CD4-positive, alpha-beta T cell (primary cell): ENCODE measurements at regions of chr18 and their contacts with region 1.

Region 1: DNA sequence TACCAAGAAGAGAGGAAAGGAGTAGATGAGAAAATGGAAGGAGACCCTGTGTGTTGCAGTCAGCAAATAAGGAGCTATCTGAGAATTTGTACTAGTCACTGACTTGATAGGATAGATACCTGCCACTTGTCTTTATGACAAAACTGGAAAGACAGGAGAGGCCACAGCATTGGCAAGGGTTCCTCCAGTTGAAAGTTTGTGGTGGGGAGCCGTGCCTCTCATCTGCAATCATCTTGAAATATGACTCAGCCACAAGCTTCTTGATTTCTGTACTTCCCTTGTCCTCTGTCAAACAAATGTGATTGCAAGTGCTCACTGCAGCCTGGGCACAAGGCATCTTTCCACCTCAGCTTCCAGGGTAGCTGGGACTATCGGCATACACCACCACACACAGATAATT is 99.1 kb downstream of the GREB1L start:
- DNase-seq: no peak
- ATAC-seq: no peak
- H3K4me3 ChIP-seq: no peak overlapping the region
- H3K4me3 Mint-ChIP-seq: no peak overlapping the region
- H3K27ac ChIP-seq: no peak overlapping the region
- H3K27ac Mint-ChIP-seq: no peak overlapping the region
- H3K4me1 ChIP-seq: no peaks in the 10 kb centered on the region
- H3K4me1 Mint-ChIP-seq: no peaks in the 10 kb centered on the region
- H3K27me3 ChIP-seq: no peaks in the 10 kb centered on the region
- H3K27me3 Mint-ChIP-seq: peaks cover 12% of the 10 kb centered on the region
- CTCF ChIP-seq: no peak

Region 2: DNA sequence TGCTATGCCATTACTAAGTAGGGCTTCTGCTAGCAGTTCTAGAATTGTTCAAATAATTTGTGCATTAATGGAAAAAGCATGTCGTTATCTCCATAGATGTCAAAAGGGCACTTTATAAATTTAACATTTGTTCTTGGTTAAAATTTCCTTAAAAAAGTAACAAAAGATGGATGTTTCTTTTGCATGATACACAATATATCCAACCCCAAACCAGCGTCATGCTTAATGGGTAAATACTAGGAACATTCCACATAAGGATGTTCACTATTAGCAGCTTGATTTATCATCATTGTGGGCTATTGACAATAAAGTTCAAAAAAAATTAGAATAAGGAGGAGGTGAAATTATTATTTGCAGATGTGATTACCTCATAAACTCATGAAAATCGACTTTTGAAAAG is 19.4 kb before region 1 on chr18:
- CTCF ChIA-PET with region 1: no interaction called
- POLR2A ChIA-PET with region 1: no interaction called
- intact Hi-C with region 1: loop called in 1 of 2 experiments (anchors 2 kb)
- DNase-seq: no peak
- ATAC-seq: no peak
- H3K4me3 ChIP-seq: no peak overlapping the region
- H3K4me3 Mint-ChIP-seq: no peak overlapping the region
- H3K27ac ChIP-seq: no peak overlapping the region
- H3K27ac Mint-ChIP-seq: no peak overlapping the region
- H3K4me1 ChIP-seq: no peaks in the 10 kb centered on the region
- H3K4me1 Mint-ChIP-seq: no peaks in the 10 kb centered on the region
- H3K27me3 ChIP-seq: no peaks in the 10 kb centered on the region
- H3K27me3 Mint-ChIP-seq: peaks cover 5% of the 10 kb centered on the region
- CTCF ChIP-seq: no peak

Region 3: GRCh38 chr18:21548637-21549036 is 207.5 kb after region 1 on chr18:
- CTCF ChIA-PET with region 1: no interaction called
- POLR2A ChIA-PET with region 1: no interaction called
- intact Hi-C with region 1: no loop called
- DNase-seq: no peak
- ATAC-seq: no peak
- H3K4me3 ChIP-seq: no peak overlapping the region
- H3K4me3 Mint-ChIP-seq: no peak overlapping the region
- H3K27ac ChIP-seq: no peak overlapping the region
- H3K27ac Mint-ChIP-seq: no peak overlapping the region
- H3K4me1 ChIP-seq: no peaks in the 10 kb centered on the region
- H3K4me1 Mint-ChIP-seq: peaks cover 8% of the 10 kb centered on the region
- H3K27me3 ChIP-seq: no peaks in the 10 kb centered on the region
- H3K27me3 Mint-ChIP-seq: no peaks in the 10 kb centered on the region
- CTCF ChIP-seq: no peak